ENCODE measurements at regions of chr12 and their contacts with region 1.

Region 1: DNA sequence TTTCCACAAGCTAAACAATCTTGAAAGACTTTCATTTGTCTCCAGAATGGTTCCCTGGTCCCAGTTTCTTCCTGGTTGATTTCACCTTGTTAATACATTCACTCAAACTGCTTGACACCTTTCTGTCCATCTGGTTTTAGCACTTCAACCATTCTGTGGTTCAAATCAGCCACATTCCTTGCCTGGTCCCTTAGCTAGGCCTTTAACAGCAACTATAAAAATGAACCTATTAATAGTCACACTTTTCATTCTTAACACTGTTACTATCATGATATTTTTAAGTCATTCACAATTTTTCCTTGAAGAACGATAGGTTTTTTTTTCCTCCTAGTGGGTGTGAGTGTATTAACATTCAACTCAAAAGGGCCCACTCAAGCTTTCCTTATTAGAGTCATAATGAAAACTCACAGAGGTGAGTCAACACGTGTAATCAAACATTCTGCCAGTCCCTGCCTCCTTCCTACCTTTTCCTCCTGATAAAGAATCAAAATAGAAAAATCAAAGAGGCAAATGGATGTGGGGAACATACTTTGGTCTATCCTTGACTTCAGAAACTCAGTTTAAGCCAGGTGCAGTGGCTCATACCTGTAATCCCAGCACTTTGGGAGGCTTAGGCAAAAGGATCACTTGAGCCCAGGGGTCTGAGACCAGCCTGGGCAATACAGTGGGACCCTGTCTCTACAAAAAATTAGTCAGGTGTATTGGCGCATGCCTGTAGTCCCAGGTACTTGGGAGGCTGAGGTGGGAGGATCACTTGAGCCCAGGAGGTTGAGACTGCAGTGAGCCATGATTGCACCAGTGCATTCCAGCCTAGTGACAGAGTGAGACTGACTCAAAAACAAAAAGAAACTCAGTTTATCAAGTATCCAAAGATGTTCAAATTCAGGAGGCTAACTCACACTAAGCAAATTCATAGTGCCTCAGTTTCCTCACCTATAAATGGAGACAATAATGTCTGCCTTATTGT is 34.5 kb upstream of the CCNT1 start:
- DNase-seq: no peak
- H3K4me3 ChIP-seq: no peak overlapping the region
- H3K27ac ChIP-seq: no peak overlapping the region
- H3K4me1 ChIP-seq: no peaks in the 10 kb centered on the region
- H3K27me3 ChIP-seq: no peaks in the 10 kb centered on the region
- CTCF ChIP-seq: no peak
- EP300 ChIP-seq: no peak
- POLR2A ChIP-seq: no peak
- RAD21 ChIP-seq: no peak

Region 2: DNA sequence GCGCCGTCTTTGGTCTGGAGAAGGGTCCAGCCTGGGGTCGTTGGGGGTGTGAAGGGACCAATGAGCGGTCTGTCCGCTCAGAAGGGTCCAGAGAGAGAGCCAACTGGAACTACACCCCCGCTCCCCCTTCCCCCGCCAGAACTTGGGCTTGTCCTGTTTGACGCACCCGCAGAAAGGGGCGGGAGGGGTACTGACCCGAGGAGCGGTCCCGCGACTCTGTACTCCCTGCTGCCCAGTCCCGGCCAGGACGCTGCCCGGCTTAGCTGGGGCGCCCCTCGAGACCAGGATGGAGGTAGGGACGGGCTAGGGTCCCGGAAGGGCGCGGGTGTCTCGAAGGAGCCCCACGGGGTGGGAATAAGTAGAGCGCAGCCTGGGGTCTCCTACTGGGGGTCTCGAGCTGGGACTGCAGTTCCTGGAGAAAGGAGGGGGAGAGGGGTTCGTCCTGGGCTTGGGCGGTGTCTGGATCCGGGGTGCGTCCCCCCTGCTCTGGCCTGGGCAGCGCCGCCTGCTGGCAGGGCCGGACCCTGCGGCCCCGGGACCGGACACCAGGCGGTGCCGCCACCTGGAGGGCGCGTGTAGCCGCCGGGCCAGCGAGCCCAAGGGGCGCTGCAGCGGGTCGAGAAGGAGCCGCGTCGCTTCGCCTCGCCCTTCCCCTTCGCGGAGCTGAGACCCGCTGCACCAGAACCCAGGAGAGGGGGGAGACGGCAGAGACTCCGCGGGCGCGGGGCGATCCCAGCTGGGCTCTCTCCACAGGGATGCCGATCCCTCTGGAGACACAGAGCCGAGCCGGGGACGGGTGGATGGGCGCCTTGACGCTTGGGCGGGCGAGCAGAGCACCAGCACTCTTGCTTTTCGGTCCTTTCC is 63.4 kb after region 1 on chr12:
- CTCF ChIA-PET with region 1: interaction called, 14 read pairs
- POLR2A ChIA-PET with region 1: interaction called, 3 read pairs
- DNase-seq: peak in 1 of 2 experiments; percentile 94
- H3K4me3 ChIP-seq: peak overlapping the region; percentile 59 to 94 (median 88)
- H3K27ac ChIP-seq: no peak overlapping the region
- H3K4me1 ChIP-seq: peaks cover 0 to 27% (median 19%) of the 10 kb centered on the region in 4 experiments; a peak in 6 of 7 replicates
- H3K27me3 ChIP-seq: peaks cover 17 to 46% (median 36%) of the 10 kb centered on the region in 4 experiments
- CTCF ChIP-seq: peak in 2 of 3 experiments; percentile 95 to 99; a peak in 3 of 4 replicates
- EP300 ChIP-seq: no peak; a peak in 1 of 3 replicates
- POLR2A ChIP-seq: no peak
- RAD21 ChIP-seq: peak in 1 of 2 experiments; percentile 48; a peak in 2 of 4 replicates

Region 3: GRCh38 chr12:48878548-48878947 is 127.5 kb after region 1 on chr12:
- CTCF ChIA-PET with region 1: no interaction called
- POLR2A ChIA-PET with region 1: no interaction called
- DNase-seq: no peak
- H3K4me3 ChIP-seq: no peak overlapping the region
- H3K27ac ChIP-seq: no peak overlapping the region
- H3K4me1 ChIP-seq: peaks cover 7 to 18% (median 13%) of the 10 kb centered on the region in 4 experiments
- H3K27me3 ChIP-seq: no peaks in the 10 kb centered on the region
- CTCF ChIP-seq: no peak
- EP300 ChIP-seq: no peak
- POLR2A ChIP-seq: no peak
- RAD21 ChIP-seq: no peak

Region 4: GRCh38 chr12:48890657-48891418 is 139.8 kb after region 1 on chr12:
- CTCF ChIA-PET with region 1: no interaction called
- POLR2A ChIA-PET with region 1: no interaction called
- DNase-seq: peak; percentile 51 to 96
- H3K4me3 ChIP-seq: peak overlapping the region; percentile 10 to 65 (median 22)
- H3K27ac ChIP-seq: no peak overlapping the region
- H3K4me1 ChIP-seq: 0 out of 7 replicates have a peak, but pooled peaks cover 0 to 6% (median 2%) of the 10 kb centered on the region in 4 experiments
- H3K27me3 ChIP-seq: no peaks in the 10 kb centered on the region; a peak in 2 of 7 replicates
- CTCF ChIP-seq: peak; percentile 86 to 95 (median 91)
- EP300 ChIP-seq: no peak
- POLR2A ChIP-seq: no peak
- RAD21 ChIP-seq: peak; percentile 90 to 96